Common myeloid progenitor, CD34-positive (primary cell): ENCODE measurements at regions of chr3 and their contacts with region 1.

Region 1: GRCh38 chr3:159884661-159885402 is 103.8 kb upstream of the IL12A start:
- DNase-seq: peak; percentile 64 to 78 (median 71)
- H3K4me3 ChIP-seq: no peak overlapping the region
- H3K27ac ChIP-seq: no peak overlapping the region
- H3K4me1 ChIP-seq: peaks cover 3 to 38% (median 22%) of the 10 kb centered on the region in 4 experiments
- H3K27me3 ChIP-seq: no peaks in the 10 kb centered on the region

Region 2: DNA sequence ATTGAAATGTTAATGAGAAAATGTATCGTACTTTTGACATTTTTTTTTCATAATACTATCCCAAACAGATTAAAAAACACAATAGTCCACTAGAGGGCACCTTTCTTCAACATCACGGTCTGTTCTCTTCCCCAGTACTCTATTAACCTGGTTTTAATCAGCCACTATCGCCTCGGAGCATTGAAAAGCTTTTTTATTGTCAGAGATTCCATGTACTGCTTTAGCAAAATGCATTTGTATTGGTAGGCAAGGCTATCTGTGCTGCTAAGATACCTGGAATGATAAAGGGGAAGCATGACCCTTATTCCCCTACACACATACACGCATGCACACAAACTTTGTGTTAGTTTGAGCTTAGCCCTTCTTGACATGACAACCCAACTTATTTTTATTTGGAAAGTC is 56.3 kb before region 1 on chr3:
- CTCF ChIA-PET with region 1: interaction called, 250 read pairs
- POLR2A ChIA-PET with region 1: no interaction called
- DNase-seq: peak; percentile 66 to 77 (median 76)
- H3K4me3 ChIP-seq: peak overlapping the region in 1 of 7 experiments; percentile 51
- H3K27ac ChIP-seq: no peak overlapping the region
- H3K4me1 ChIP-seq: peaks cover 19 to 59% (median 50%) of the 10 kb centered on the region in 4 experiments
- H3K27me3 ChIP-seq: no peaks in the 10 kb centered on the region

Region 3: DNA sequence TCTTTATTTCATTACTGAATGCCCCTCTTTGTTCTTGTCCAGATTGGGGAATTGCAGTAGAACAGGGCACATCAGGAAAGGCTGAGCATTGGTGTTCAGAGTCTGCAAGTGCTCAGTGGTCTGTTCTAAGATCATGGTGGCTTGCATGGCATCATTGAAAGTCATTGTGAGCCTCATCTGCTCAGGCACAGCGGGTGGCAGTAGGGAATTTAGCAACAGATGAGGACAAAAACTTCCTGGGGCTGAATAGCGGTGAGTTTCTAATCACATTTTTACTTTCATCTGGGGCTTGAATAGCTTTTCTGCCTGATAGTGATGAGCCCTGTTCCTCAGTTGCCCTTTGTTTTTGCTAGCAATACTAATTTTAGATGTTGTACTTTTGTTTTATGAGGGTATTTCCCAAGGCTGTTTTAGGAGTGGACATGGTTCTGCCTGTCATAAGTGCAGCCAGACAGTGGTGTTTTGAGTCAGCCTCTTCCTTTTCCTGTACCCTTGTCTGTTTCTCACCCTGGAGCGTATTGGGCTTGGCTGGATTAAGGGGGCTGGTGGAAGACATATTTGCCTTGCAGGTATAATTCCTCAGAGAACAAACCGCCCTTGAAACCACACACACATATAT is 23.4 kb before region 1 on chr3:
- CTCF ChIA-PET with region 1: interaction called, 56 read pairs
- POLR2A ChIA-PET with region 1: no interaction called
- DNase-seq: peak in 2 of 3 donors; percentile 65 to 66
- H3K4me3 ChIP-seq: peak overlapping the region in 4 of 7 experiments; percentile 9 to 39 (median 20)
- H3K27ac ChIP-seq: peak overlapping the region in 1 of 2 experiments; percentile 74
- H3K4me1 ChIP-seq: peaks cover 16 to 93% (median 59%) of the 10 kb centered on the region in 4 experiments
- H3K27me3 ChIP-seq: no peaks in the 10 kb centered on the region

Region 4: GRCh38 chr3:159902546-159903314 is 17.9 kb after region 1 on chr3:
- CTCF ChIA-PET with region 1: interaction called, 131 read pairs
- POLR2A ChIA-PET with region 1: interaction called, 7 read pairs
- DNase-seq: peak in 1 of 3 donors; percentile 31
- H3K4me3 ChIP-seq: no peak overlapping the region
- H3K27ac ChIP-seq: no peak overlapping the region
- H3K4me1 ChIP-seq: peaks cover 12 to 40% (median 22%) of the 10 kb centered on the region in 4 experiments
- H3K27me3 ChIP-seq: no peaks in the 10 kb centered on the region

Region 5: GRCh38 chr3:159929435-159930141 is 44.8 kb after region 1 on chr3:
- CTCF ChIA-PET with region 1: interaction called, 30 read pairs
- POLR2A ChIA-PET with region 1: no interaction called
- DNase-seq: peak; percentile 95 to 97 (median 97)
- H3K4me3 ChIP-seq: peak overlapping the region in 2 of 7 experiments; percentile 13 to 20
- H3K27ac ChIP-seq: peak overlapping the region in 1 of 2 experiments; percentile 73
- H3K4me1 ChIP-seq: peaks cover 0 to 27% (median 23%) of the 10 kb centered on the region in 4 experiments
- H3K27me3 ChIP-seq: no peaks in the 10 kb centered on the region

Region 6: GRCh38 chr3:159994182-159994581 is 109.3 kb after region 1 on chr3:
- CTCF ChIA-PET with region 1: interaction called, 263 read pairs
- POLR2A ChIA-PET with region 1: no interaction called
- DNase-seq: no peak
- H3K4me3 ChIP-seq: no peak overlapping the region
- H3K27ac ChIP-seq: no peak overlapping the region
- H3K4me1 ChIP-seq: peaks cover under 1 to 20% (median 9%) of the 10 kb centered on the region in 4 experiments
- H3K27me3 ChIP-seq: no peaks in the 10 kb centered on the region

Region 7: DNA sequence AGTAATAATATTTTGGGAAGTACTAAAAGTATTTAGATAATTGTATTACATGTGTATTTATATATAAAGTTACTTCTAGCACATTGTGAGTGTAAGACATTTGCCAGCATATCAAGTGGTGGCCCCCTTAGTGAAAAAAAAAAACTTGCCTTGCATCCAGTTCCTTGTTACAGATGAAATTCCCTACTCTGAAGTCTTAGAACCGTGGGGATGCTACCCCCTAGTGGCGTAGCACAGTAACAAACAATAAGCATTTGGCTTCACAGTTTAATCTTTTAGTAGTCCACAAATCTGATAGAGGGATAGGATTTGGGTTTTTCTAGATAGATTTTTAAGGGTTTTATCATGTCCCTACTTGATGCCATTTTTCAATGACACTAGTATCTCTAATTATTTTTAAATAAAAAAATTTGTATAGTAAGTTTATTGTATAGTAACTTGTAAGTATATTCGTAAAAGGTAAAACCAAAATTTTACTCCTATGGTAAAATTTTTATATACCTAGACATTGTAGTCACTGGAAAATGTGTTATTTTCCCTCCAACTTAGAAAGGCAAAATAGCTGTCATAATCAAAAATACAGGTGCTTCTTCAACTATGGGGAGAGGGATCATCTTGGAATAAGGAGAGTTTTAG is 528.9 kb after region 1 on chr3:
- CTCF ChIA-PET with region 1: interaction called, 10 read pairs
- POLR2A ChIA-PET with region 1: no interaction called
- DNase-seq: peak; percentile 89 to 94 (median 90)
- H3K4me3 ChIP-seq: no peak overlapping the region
- H3K27ac ChIP-seq: no peak overlapping the region
- H3K4me1 ChIP-seq: peaks cover 8 to 23% (median 13%) of the 10 kb centered on the region in 4 experiments
- H3K27me3 ChIP-seq: no peaks in the 10 kb centered on the region